HEK293 (cell line): ENCODE measurements at regions of chr14 and their contacts with region 1.

Region 1: DNA sequence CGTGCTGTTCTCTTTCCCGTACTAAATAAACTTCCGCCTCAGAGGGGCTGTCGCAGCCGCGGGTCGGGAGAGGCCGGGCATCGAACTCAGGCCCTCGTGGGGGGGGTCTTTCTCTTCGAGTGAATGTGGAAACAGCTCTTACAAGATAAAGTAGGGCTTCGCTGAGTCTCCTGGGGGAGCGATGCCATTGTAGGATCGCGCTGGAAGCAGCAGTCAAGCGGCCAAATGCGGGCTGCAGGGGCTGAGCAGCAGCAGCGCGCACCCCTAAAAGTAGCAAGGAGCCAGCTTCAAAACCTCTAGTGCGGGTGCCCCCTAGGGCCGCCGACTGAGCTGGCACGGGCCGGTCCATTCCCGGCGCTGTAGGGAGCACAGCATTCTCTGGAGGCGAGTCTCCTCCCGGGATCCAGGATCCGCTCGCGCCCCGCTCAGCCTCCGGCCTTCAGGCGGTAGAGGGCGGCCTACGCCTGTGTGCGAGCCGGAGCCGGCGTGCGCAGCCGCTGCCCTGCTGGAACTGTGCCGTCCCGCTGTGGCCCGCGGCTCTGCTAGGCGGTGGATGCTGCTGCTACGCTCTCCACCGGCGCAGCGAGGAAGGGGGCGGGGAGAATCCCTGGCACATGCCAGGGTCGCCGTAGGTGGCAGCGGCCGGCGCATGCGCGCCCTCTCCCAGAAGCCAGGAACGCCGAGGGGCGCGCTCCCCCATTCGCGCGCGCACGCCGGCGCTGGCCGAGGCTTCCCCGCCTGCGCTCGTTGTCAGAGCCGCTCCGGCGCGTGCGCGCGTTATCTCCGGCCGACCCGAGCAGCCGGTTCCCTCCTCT is at the start of gene FUT8:
- H3K4me3 ChIP-seq: peak within 1 kb of the TSS; percentile 96
- H3K27ac ChIP-seq: peak within 1 kb of the TSS; percentile 96
- H3K4me1 ChIP-seq: 0 out of 2 replicates have a peak, but pooled peaks cover 2% of the 10 kb centered on the region
- CTCF ChIP-seq: peak; percentile 98

Region 2: GRCh38 chr14:65131301-65131701 is 280.9 kb before region 1 on chr14:
- CTCF ChIA-PET with region 1: no interaction called
- POLR2A ChIA-PET with region 1: no interaction called
- H3K4me3 ChIP-seq: no peak overlapping the region
- H3K27ac ChIP-seq: no peak overlapping the region
- H3K4me1 ChIP-seq: no peaks in the 10 kb centered on the region
- CTCF ChIP-seq: no peak

Region 3: DNA sequence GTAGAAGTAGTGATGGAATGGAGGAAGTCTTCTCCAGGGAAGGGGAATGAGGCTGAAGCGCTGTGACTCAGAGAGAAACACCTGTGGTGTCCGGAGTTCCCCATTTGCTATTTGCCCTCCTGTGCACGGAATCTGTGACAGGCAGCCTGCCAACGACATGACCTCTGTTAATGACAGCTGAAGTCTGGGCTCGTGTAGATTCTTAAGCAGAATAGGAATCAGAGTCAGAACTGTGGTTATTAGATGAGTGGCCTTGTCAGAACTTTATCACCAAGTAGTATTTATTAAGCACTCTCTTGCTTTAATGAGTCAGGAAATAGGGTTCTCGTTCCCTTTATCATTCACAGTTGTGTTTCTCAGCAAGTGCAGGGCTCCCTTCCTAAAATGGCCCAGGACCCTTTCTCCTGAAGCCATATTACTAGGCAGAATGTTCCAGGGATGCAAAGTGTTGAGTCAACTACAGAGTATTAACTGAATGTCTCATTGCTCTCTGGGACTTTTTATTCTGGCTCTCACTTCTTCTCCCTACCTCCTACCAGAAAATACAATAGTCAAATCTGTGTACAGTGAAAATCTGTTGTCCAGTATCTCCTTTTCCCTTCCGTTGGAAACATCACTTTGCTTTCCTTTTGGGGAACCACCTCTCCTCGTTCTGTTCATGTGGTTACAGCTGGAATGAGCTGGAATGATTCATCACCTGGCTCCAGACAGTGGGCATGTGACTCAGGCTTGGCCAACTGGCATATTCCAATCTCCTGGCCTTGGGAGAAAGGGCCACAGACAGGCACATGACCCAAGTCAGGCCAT is 232.1 kb before region 1 on chr14:
- CTCF ChIA-PET with region 1: no interaction called
- POLR2A ChIA-PET with region 1: no interaction called
- H3K4me3 ChIP-seq: no peak overlapping the region
- H3K27ac ChIP-seq: no peak overlapping the region
- H3K4me1 ChIP-seq: no peaks in the 10 kb centered on the region
- CTCF ChIP-seq: no peak

Region 4: GRCh38 chr14:66070509-66071319 is 658.5 kb after region 1 on chr14:
- CTCF ChIA-PET with region 1: interaction called, 26 read pairs
- POLR2A ChIA-PET with region 1: no interaction called
- H3K4me3 ChIP-seq: no peak overlapping the region
- H3K27ac ChIP-seq: no peak overlapping the region
- H3K4me1 ChIP-seq: no peaks in the 10 kb centered on the region
- CTCF ChIP-seq: no peak